ENCODE measurements at regions of chr19 and their contacts with region 1.

Region 1: DNA sequence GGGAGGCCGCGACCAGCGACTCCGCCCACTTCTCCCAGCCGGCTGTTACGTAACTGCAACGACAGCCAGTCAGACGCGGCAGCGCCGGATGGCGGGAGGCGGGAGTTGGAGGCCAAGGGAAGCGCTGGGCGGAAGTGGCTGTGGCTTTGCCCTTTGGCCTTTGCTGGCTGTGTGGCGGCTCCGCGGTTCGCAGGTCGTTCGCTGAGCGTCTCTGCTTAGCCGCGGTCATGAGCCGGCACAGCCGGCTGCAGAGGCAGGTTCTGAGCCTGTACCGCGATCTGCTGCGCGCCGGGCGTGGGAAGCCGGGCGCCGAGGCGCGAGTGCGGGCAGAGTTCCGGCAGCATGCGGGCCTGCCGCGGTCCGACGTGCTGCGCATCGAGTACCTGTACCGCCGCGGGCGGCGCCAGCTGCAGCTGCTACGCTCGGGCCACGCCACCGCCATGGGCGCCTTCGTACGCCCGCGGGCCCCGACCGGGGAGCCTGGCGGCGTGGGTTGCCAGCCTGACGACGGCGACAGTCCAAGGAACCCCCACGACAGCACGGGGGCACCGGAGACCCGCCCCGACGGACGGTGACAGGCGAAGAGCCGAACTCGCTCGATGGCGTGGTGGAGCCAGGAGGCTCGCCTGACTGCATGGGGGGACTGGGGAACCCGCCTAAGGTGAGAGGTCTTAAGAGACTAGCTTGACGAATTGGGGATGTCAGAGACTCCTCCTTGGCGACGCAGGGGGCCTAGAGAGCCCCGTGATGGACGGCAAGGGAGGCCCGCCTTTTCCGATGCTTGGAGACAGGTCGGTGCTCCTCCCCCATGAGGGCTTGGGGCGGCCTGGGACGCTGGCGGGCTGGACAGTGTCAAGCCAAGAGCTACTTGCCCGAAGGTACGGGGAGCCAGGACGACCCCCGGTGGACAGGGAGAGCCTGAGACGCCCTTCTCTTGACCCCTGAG is at the start of gene SDHAF1:
- DNase-seq: peak; percentile 93
- H3K4me3 Mint-ChIP-seq: peak within 1 kb of the TSS; percentile 94
- H3K27ac Mint-ChIP-seq: peak within 1 kb of the TSS; percentile 92
- H3K4me1 Mint-ChIP-seq: peaks cover 24% of the 10 kb centered on the region
- H3K27me3 Mint-ChIP-seq: peaks cover 3% of the 10 kb centered on the region
- total RNA-seq, gene SDHAF1: 21.2 and 24.5 TPM in 2 replicates

Region 2: GRCh38 chr19:35702223-35703012 is 292.9 kb before region 1 on chr19:
- intact Hi-C with region 1: loop called (anchors 1 kb)
- DNase-seq: peak; percentile 93
- H3K4me3 Mint-ChIP-seq: peak overlapping the region; percentile 95
- H3K27ac Mint-ChIP-seq: peak overlapping the region; percentile 97
- H3K4me1 Mint-ChIP-seq: peaks cover 18% of the 10 kb centered on the region
- H3K27me3 Mint-ChIP-seq: no peaks in the 10 kb centered on the region

Region 3: DNA sequence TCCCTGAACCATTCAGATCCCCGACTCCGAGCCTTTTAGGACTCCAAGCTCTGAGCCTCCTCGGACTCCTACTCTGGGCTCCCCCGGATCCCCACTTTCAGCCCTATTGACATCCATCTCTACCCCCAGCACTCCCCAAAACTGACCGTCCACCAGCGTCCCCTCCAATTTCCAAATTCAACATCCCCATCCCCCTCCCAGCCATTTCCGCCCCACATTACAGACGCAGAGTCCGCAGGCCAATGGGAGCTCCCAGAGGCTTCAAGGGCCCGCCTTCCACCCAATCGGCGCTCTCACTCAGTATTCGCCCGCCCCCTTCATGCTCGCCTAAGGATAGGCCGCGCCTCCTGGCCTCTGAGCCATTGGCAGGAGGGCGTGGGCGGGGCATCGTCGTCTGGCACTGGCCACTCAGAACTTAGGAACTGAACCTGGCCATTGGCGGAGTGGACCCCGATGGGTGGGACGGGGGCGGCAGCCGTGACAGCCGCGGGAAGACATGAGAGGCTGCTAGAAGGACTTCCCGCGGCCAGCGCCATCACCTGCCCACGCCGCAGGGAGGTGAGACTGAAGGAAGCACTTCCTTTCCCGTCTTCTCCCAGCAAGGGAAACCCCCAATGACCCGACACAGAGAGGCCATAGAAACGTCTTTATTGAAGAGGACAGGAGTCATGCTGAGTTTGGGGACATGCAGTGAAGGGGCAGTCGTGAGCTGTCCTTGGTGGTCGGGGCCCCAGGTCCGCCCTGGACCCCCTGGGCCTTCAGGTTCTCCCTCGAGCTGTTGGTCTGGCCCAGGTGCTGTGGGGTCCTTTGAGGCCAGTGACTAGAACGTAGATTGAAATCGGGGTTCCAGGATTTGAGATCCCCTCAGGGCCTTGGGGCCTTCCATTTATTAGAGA is 19.0 kb after region 1 on chr19 and contains the start of gene ALKBH6:
- intact Hi-C with region 1: loop called (anchors 1 kb)
- DNase-seq: peak; percentile 100
- H3K4me3 Mint-ChIP-seq: peak within 1 kb of the TSS; percentile 98
- H3K27ac Mint-ChIP-seq: peak within 1 kb of the TSS; percentile 96
- H3K4me1 Mint-ChIP-seq: peaks cover 46% of the 10 kb centered on the region
- H3K27me3 Mint-ChIP-seq: no peaks in the 10 kb centered on the region
- total RNA-seq, gene ALKBH6: 48.3 and 60.6 TPM in 2 replicates

Region 4: GRCh38 chr19:36169084-36169760 is 173.9 kb after region 1 on chr19:
- intact Hi-C with region 1: loop called (anchors 1 kb)
- DNase-seq: no peak
- H3K4me3 Mint-ChIP-seq: no peak overlapping the region
- H3K27ac Mint-ChIP-seq: no peak overlapping the region
- H3K4me1 Mint-ChIP-seq: no peaks in the 10 kb centered on the region
- H3K27me3 Mint-ChIP-seq: peaks cover 1% of the 10 kb centered on the region